ENCODE measurements at regions of chr9 and their contacts with region 1.

Region 1: GRCh38 chr9:130860458-130861316 is 25.6 kb downstream of the ABL1 start:
- DNase-seq: no peak
- ATAC-seq: no peak
- H3K4me3 ChIP-seq: no peak overlapping the region
- H3K27ac ChIP-seq: no peak overlapping the region
- H3K4me1 ChIP-seq: peaks cover 6% of the 10 kb centered on the region
- H3K27me3 ChIP-seq: no peaks in the 10 kb centered on the region
- CTCF ChIP-seq: no peak
- EP300 ChIP-seq: no peak
- POLR2A ChIP-seq: no peak
- RAD21 ChIP-seq: no peak

Region 2: DNA sequence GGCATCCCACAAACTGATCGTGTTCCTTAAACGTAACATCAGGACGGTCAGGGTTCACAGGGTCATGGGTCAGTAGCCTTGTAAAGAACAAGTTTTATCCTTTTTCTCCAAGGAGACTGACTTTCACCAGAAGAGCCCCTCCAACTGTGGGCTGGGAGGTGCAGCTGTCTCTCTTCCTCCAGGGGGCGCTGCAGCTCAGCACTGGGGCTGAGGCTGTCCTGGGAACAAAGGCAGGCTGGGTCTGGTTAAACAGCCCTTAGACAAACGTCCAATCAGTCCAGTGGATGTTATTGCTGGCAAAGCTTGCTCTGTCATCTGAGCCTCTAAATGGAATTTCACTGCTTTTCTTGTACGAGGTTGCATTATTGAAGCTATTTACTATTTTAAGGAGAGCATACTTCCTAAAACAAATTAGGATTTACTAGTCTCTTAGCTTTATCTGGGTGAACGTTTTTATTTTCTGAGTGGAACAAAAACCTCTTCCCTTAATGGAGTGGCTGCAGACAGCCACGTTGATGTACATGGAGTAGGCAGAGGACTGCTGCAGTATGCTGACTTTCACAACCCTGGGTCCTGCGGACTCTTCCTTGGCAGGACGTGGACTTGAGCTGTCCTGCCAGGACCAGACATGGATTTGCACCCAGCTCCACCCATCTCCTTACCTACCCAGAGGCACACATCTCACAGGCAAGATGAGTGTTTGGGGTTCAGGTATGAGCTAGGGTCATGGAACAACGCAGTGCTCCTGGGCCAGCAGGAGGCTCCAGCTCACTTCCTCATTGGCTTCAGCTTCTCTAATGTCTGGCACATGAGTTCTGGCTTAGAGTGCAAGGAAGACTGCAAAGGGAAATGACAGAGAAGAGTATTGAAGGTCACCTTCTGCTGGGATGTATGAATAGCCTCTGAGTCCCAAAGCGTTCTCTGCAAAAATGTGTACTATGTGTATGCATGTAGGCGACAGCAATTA is 159.3 kb before region 1 on chr9:
- CTCF ChIA-PET with region 1: interaction called, 13 read pairs
- POLR2A ChIA-PET with region 1: no interaction called
- in situ Hi-C with region 1: no loop called
- intact Hi-C with region 1: no loop called
- DNase-seq: peak; percentile 74
- ATAC-seq: peak; percentile 97
- H3K4me3 ChIP-seq: no peak overlapping the region
- H3K27ac ChIP-seq: no peak overlapping the region
- H3K4me1 ChIP-seq: peaks cover 39% of the 10 kb centered on the region
- H3K27me3 ChIP-seq: no peaks in the 10 kb centered on the region
- CTCF ChIP-seq: peak; percentile 92
- EP300 ChIP-seq: no peak
- POLR2A ChIP-seq: peak in 1 of 2 experiments; percentile 30; a peak in 1 of 4 replicates
- RAD21 ChIP-seq: peak; percentile 65

Region 3: DNA sequence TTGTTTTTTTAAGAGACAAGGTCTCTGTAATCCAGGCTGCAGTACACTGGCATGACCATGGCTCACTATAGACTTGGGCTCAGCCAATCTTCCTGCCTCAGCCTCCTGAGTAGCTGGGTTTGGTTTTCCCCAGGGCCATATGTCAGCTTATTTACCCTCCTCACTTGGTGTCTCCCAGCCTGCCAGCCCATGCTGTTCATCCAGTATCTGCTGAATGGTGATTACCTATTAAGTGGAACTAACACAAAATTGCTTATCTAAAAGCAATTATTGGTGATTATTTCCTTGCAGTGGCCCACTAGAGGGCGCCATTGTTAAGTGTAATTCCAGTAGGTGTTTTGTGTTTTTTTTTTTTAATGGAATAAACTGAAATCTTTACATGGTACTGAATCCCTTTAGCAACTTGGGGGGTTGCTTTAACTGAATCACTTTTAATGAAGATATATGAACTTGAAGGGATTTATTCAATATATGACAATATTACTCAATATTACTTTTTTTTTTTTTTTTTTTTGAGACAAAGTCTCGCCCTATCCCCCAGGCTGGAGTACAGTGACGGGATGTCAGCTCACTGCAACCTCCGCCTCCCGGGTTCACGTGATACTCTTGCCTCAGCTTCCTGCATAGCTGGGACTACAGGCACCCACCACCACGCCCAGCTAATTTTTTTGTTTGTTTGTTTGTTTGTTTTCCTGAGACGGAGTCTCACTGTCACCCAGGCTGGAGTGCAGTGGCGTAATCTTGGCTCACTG is 153.3 kb before region 1 on chr9:
- CTCF ChIA-PET with region 1: interaction called, 14 read pairs
- POLR2A ChIA-PET with region 1: no interaction called
- in situ Hi-C with region 1: loop called (anchors 5 kb)
- intact Hi-C with region 1: loop called (anchors 1 kb)
- DNase-seq: peak; percentile 63
- ATAC-seq: peak; percentile 65
- H3K4me3 ChIP-seq: no peak overlapping the region
- H3K27ac ChIP-seq: no peak overlapping the region
- H3K4me1 ChIP-seq: no peaks in the 10 kb centered on the region; the same call in 1 of the 2 replicates
- H3K27me3 ChIP-seq: no peaks in the 10 kb centered on the region
- CTCF ChIP-seq: peak; percentile 67
- EP300 ChIP-seq: no peak
- POLR2A ChIP-seq: no peak
- RAD21 ChIP-seq: 0 out of 2 replicates have a peak, but pooled peaks have one; percentile 31

Region 4: DNA sequence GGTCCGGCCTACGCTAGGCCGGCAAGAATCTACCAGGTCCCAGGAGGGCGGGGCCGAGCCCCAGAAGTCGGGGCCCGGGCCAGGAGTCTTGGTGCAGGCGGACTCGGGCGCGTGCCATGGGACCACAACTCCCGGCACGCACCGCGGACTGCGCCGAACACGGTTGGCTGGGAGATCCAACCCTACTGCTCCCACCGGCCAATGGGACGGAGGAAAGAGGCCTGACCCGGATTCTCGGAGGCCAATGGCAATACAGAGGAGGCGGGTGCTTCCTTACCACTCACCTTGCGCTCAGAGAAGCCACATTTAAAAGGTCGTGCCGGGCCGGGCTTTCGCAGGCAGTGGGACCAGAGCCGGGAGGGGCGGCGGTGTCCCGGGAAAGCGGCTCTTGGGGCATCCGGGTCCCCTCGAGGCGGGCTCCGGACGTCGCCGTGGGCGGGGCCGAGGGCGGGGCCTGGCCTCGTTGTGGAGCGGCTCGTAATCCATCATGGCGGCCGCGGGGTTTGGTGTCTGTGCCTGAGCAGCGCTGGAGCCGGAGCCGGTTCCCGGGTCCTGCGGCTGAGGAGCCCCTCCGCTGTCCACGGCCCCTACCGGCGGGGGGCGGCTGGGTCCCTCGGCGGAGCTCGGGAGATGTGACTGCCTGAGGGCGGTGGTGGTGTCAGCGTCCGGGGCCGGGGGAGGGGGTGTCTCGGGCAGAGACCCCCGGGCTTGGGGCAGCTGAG is 148.0 kb before region 1 on chr9:
- CTCF ChIA-PET with region 1: interaction called, 14 read pairs
- POLR2A ChIA-PET with region 1: no interaction called
- in situ Hi-C with region 1: loop called (anchors 5 kb)
- intact Hi-C with region 1: loop called (anchors 1 kb)
- DNase-seq: peak; percentile 95
- ATAC-seq: peak; percentile 98
- H3K4me3 ChIP-seq: peak overlapping the region; percentile 91 to 95 (median 92)
- H3K27ac ChIP-seq: peak overlapping the region; percentile 96
- H3K4me1 ChIP-seq: peaks cover 26% of the 10 kb centered on the region
- H3K27me3 ChIP-seq: no peaks in the 10 kb centered on the region; a peak in 1 of 5 replicates
- CTCF ChIP-seq: no peak
- EP300 ChIP-seq: no peak
- POLR2A ChIP-seq: peak in 1 of 2 experiments; percentile 89
- RAD21 ChIP-seq: 0 out of 2 replicates have a peak, but pooled peaks have one; percentile 7

Region 5: GRCh38 chr9:130770679-130771442 is 89.8 kb before region 1 on chr9:
- CTCF ChIA-PET with region 1: interaction called, 19 read pairs
- POLR2A ChIA-PET with region 1: no interaction called
- in situ Hi-C with region 1: loop called (anchors 5 kb)
- intact Hi-C with region 1: loop called (anchors 1 kb)
- DNase-seq: peak; percentile 50
- ATAC-seq: peak; percentile 65
- H3K4me3 ChIP-seq: no peak overlapping the region
- H3K27ac ChIP-seq: no peak overlapping the region
- H3K4me1 ChIP-seq: peaks cover 32% of the 10 kb centered on the region
- H3K27me3 ChIP-seq: no peaks in the 10 kb centered on the region
- CTCF ChIP-seq: peak; percentile 69
- EP300 ChIP-seq: no peak
- POLR2A ChIP-seq: no peak
- RAD21 ChIP-seq: no peak; the same call in 1 of the 2 replicates